ENCODE measurements at regions of chr12 and their contacts with region 1.

Region 1: GRCh38 chr12:10130042-10130441 is at the start of gene CLEC7A:
- DNase-seq: no peak
- H3K4me3 ChIP-seq: peak within 1 kb of the TSS; percentile 0 to 22 (median 4)
- H3K27ac ChIP-seq: peak within 1 kb of the TSS in 1 of 2 donors; percentile 28
- H3K4me1 ChIP-seq: no peaks in the 10 kb centered on the region
- H3K27me3 ChIP-seq: no peaks in the 10 kb centered on the region
- CTCF ChIP-seq: no peak
- POLR2A ChIP-seq: no peak
- total RNA-seq, gene CLEC7A: 5.2 to 14.7 (median 13.8) TPM

Region 2: DNA sequence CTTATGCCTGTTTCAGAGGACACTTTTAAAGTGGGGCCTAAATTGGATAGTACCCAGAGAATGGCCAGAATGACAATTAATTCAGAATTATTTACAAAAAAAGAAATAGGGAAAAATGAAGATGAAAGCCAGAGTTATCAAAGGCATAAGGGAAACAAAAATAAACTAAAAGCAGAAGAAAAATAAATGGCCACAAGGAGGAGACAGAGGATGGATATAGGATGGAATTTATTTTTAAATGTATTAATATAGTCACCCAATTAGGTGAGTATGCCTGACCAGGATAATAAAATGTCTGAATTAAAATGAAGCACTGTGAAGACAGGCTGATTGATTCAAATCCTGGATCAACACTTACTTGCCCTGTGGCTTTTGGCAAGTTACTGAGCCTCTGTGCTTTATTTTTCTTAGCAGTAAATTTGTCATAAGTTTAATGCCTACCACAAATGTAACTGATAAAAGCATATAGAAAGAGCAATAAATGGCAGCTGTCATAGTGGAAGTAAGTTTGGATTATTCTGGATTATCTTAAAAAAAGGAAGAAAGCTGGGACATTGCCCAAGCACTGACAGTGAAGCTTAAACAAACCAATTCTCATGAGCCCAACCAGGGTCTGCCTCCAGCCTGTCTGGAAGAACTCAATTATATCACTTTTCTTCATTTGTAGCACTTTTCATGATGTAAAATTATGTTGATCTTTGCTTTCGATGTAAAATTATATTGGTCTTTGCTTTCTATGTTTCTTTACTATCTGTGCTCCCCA is 96.1 kb before region 1 on chr12:
- intact Hi-C with region 1: loop called (anchors 10 kb)
- DNase-seq: no peak
- H3K4me3 ChIP-seq: no peak overlapping the region
- H3K27ac ChIP-seq: no peak overlapping the region
- H3K4me1 ChIP-seq: no peaks in the 10 kb centered on the region
- H3K27me3 ChIP-seq: no peaks in the 10 kb centered on the region
- CTCF ChIP-seq: peak in 2 of 3 donors; percentile 49 to 56
- POLR2A ChIP-seq: no peak